ENCODE measurements at regions of chr1 and their contacts with region 1.

Region 1: GRCh38 chr1:46406881-46407608 is 12.9 kb downstream of the FAAH start:
- DNase-seq: peak; percentile 27 to 48
- ATAC-seq: no peak
- H3K4me3 ChIP-seq: no peak overlapping the region
- H3K27ac ChIP-seq: no peak overlapping the region
- H3K4me1 ChIP-seq: no peaks in the 10 kb centered on the region
- H3K27me3 ChIP-seq: no peaks in the 10 kb centered on the region

Region 2: GRCh38 chr1:46393510-46393909 is 13.5 kb before region 1 on chr1:
- intact Hi-C with region 1: no loop called
- DNase-seq: no peak
- ATAC-seq: no peak
- H3K4me3 ChIP-seq: no peak overlapping the region
- H3K27ac ChIP-seq: no peak overlapping the region
- H3K4me1 ChIP-seq: no peaks in the 10 kb centered on the region
- H3K27me3 ChIP-seq: no peaks in the 10 kb centered on the region

Region 3: DNA sequence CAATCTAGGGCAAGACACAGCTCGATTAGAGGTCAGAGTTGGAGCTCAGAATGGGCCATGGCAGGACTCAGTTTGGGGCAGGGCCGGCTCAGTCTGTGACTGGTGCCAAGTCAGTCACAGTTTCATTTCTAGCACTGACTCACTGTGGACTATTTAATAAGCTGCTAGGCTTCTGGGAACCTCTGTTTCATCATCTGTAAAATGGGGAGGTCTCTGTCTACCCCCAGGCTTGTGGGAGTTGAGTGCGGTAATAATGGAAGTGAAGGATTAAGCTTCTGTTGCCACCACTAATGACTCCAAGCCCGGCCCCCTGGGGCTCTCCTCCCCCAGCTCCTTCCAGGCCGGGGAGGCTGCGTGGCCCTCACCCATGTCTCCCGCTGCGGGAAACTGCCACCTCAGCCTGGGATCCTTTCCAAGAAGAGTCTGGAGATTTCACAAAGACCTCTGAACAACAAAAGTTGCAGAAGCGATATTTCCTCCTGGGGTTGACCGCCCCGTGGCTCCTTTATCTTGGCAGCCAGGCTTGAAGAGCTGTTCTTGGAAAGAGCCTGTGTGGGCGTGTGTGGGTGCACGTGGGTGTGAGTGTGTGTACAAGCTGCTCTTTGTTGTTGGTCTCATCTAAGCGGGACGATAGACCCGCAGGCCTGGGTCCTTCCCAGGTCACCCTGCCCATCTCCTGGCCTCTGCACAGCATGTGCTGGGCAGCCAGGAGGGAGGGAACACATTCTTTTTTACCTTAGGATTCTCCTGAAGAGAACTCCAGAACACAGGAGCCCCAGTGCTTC is 115.3 kb after region 1 on chr1:
- intact Hi-C with region 1: loop called in 1 of 2 experiments (anchors 2 kb)
- DNase-seq: peak; percentile 65 to 82
- ATAC-seq: peak; percentile 31
- H3K4me3 ChIP-seq: no peak overlapping the region
- H3K27ac ChIP-seq: no peak overlapping the region
- H3K4me1 ChIP-seq: no peaks in the 10 kb centered on the region
- H3K27me3 ChIP-seq: no peaks in the 10 kb centered on the region

Region 4: GRCh38 chr1:46718727-46719622 is 311.9 kb after region 1 on chr1 and contains the start of gene EFCAB14:
- intact Hi-C with region 1: loop called in 1 of 2 experiments (anchors 5 kb)
- DNase-seq: peak; percentile 96 to 99
- ATAC-seq: peak; percentile 99
- H3K4me3 ChIP-seq: peak within 1 kb of the TSS; percentile 60 to 82
- H3K27ac ChIP-seq: no peak within 1 kb of the TSS
- H3K4me1 ChIP-seq: no peaks in the 10 kb centered on the region
- H3K27me3 ChIP-seq: no peaks in the 10 kb centered on the region
- total RNA-seq, gene EFCAB14: 101 to 108 TPM

Measured in aorta (tissue), 5 donors.